ENCODE measurements at regions of chr7 and their contacts with region 1.

Region 1: GRCh38 chr7:44213877-44214388 is 13.2 kb downstream of the YKT6 start:
- DNase-seq: no peak
- ATAC-seq: no peak
- H3K4me3 Mint-ChIP-seq: no peak overlapping the region
- H3K27ac Mint-ChIP-seq: no peak overlapping the region
- H3K4me1 Mint-ChIP-seq: peaks cover 10% of the 10 kb centered on the region
- H3K27me3 Mint-ChIP-seq: no peaks in the 10 kb centered on the region

Region 2: GRCh38 chr7:44200647-44201461 is 13.1 kb before region 1 on chr7 and contains the start of gene YKT6:
- CTCF ChIA-PET with region 1: interaction called, 14 read pairs
- DNase-seq: peak; percentile 98
- ATAC-seq: peak; percentile 100
- H3K4me3 Mint-ChIP-seq: peak within 1 kb of the TSS; percentile 81
- H3K27ac Mint-ChIP-seq: peak within 1 kb of the TSS; percentile 71
- H3K4me1 Mint-ChIP-seq: peaks cover 30% of the 10 kb centered on the region
- H3K27me3 Mint-ChIP-seq: peaks cover 7% of the 10 kb centered on the region
- total RNA-seq, gene YKT6: 57.9 to 68.3 TPM

Region 3: DNA sequence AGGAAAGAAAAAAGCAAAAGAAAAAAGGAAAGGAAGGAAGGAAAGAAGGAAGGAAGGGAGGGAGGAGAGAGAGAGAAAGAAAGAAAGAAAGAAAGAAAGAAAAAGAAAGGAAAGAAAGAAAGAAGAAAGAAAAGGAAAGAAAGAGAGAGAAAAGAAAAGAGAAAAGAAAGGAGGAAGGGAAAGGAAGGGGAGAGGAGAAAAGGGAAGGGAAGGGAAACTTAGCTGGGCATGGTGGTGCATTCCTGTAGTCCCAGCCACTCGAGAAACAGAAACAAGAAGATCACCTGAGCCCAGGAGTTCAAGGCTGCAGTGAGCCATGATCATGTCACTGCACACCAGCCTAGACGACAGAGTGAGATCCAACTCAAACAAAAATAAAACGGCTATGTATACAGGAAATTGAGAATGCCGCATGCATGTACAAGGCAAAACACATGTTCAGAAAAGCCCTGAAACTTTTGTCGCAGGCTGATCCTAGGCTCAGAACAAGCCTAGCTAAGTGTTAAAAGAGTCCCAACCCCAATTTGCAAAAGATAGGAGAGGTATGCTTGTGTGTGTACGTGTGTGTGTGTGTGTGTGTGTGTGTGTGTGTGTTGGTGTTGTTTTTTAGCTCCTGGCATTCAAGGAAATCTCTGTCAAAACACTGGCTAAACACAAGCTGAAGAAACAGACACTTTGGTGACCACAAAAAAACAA is 333.8 kb after region 1 on chr7:
- CTCF ChIA-PET with region 1: no interaction called
- DNase-seq: no peak
- ATAC-seq: no peak
- H3K4me3 Mint-ChIP-seq: no peak overlapping the region
- H3K27ac Mint-ChIP-seq: no peak overlapping the region
- H3K4me1 Mint-ChIP-seq: peaks cover 5% of the 10 kb centered on the region
- H3K27me3 Mint-ChIP-seq: peaks cover 29% of the 10 kb centered on the region

Measured in activated CD8-positive, alpha-beta memory T cell treated with anti-CD3 and anti-CD28 coated beads, Interleukin-2, amount 10 ng/mL, durations not matched to agents 7 days and 5 days (primary cell).